Naive thymus-derived CD4-positive, alpha-beta T cell (primary cell): ENCODE measurements at regions of chr3 and their contacts with region 1.

Region 1: DNA sequence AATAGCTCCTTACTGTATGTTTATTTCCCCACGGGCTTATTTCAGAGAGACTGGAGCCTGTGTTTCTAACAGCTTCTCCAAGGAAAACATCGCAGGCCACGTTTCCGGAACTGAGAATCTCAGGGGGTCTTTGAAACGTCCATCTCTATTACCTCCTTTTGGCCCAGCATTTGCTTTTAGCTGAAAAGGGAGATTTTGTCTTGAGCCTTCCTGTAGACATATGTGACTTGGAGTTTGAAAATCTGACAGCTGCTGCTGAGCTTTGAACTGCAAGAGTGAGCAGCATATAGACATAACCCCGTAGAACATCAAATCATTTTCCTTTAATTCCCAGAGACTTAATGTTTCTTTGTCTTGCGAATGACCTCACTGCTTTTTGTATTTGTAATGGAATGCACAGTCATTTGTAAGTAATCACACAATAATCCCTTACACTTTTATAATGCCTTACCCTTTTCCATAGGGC is 54.6 kb downstream of the LPP start:
- DNase-seq: no peak
- ATAC-seq: no peak
- H3K4me3 ChIP-seq: no peak overlapping the region
- H3K4me3 Mint-ChIP-seq: no peak overlapping the region
- H3K27ac ChIP-seq: no peak overlapping the region
- H3K27ac Mint-ChIP-seq: no peak overlapping the region
- H3K4me1 ChIP-seq: no peaks in the 10 kb centered on the region
- H3K4me1 Mint-ChIP-seq: peaks cover 7 to 22% (median 12%) of the 10 kb centered on the region in 7 donors
- H3K27me3 ChIP-seq: no peaks in the 10 kb centered on the region
- H3K27me3 Mint-ChIP-seq: no peaks in the 10 kb centered on the region

Region 2: DNA sequence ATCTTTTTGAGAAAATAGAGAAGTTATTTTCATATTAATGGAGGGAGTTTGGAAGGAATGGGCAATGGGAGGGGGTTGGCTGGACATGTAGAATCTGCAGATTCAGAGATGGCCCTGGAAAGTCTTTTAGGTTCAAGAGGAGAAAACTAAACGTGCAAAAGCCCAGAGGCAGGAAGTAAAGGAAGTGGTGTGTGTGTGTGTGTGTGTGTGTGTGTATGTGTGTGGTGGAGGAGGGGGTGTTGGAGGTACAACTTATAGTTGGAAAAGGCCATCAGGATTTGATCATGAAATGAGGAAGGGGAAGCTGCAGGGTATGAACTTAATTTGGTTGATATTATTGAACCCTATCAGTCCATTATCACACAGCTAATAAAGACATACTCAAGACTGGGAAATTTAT is 60.2 kb before region 1 on chr3:
- CTCF ChIA-PET with region 1: no interaction called
- POLR2A ChIA-PET with region 1: no interaction called
- intact Hi-C with region 1: loop called in 1 of 2 experiments (anchors 2 kb)
- DNase-seq: no peak
- ATAC-seq: no peak
- H3K4me3 ChIP-seq: no peak overlapping the region
- H3K4me3 Mint-ChIP-seq: peak overlapping the region in 2 of 10 donors; percentile 1 to 9
- H3K27ac ChIP-seq: no peak overlapping the region
- H3K27ac Mint-ChIP-seq: peak overlapping the region in 6 of 9 donors; percentile 7 to 57 (median 26)
- H3K4me1 ChIP-seq: peaks cover 0 to 11% of the 10 kb centered on the region in 2 donors
- H3K4me1 Mint-ChIP-seq: peaks cover 13 to 35% (median 28%) of the 10 kb centered on the region in 7 donors
- H3K27me3 ChIP-seq: no peaks in the 10 kb centered on the region
- H3K27me3 Mint-ChIP-seq: no peaks in the 10 kb centered on the region